Natural killer cell (primary cell): ENCODE measurements at regions of chr21 and their contacts with region 1.

Region 1: DNA sequence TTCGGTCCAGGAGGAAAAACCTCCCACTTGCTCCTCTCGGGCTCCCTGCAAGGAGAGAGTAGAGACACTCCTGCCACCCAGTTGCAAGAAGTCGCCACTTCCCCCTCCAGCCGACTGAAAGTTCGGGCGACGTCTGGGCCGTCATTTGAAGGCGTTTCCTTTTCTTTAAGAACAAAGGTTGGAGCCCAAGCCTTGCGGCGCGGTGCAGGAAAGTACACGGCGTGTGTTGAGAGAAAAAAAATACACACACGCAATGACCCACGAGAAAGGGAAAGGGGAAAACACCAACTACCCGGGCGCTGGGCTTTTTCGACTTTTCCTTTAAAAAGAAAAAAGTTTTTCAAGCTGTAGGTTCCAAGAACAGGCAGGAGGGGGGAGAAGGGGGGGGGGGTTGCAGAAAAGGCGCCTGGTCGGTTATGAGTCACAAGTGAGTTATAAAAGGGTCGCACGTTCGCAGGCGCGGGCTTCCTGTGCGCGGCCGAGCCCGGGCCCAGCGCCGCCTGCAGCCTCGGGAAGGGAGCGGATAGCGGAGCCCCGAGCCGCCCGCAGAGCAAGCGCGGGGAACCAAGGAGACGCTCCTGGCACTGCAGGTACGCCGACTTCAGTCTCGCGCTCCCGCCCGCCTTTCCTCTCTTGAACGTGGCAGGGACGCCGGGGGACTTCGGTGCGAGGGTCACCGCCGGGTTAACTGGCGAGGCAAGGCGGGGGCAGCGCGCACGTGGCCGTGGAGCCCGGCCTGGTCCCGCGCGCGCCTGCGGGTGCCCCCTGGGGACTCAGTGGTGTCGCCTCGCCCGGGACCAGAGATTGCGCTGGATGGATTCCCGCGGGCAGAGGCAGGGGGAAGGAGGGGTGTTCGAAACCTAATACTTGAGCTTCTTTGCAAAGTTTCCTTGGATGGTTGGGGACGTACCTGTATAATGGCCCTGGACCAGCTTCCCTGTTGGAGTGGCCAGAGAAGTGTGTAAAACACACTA is 45.3 kb downstream of the MRPL39 start:
- DNase-seq: peak; percentile 67 to 82
- ATAC-seq: peak; percentile 68 to 81 (median 77)
- H3K4me3 ChIP-seq: peak overlapping the region; percentile 52
- H3K4me3 Mint-ChIP-seq: peak overlapping the region; percentile 97
- H3K27ac ChIP-seq: peak overlapping the region; percentile 52
- H3K27ac Mint-ChIP-seq: peak overlapping the region; percentile 83 to 84
- H3K4me1 ChIP-seq: peaks cover 28% of the 10 kb centered on the region
- H3K4me1 Mint-ChIP-seq: peaks cover 45 to 46% of the 10 kb centered on the region in 2 donors
- H3K27me3 ChIP-seq: no peaks in the 10 kb centered on the region
- H3K27me3 Mint-ChIP-seq: no peaks in the 10 kb centered on the region
- CTCF ChIP-seq: no peak

Region 2: GRCh38 chr21:25421327-25422028 is 140.5 kb before region 1 on chr21:
- intact Hi-C with region 1: loop called (anchors 1 kb)
- DNase-seq: peak in 1 of 2 donors; percentile 84
- ATAC-seq: peak; percentile 62 to 74 (median 68)
- H3K4me3 ChIP-seq: no peak overlapping the region
- H3K4me3 Mint-ChIP-seq: no peak overlapping the region
- H3K27ac ChIP-seq: peak overlapping the region; percentile 23
- H3K27ac Mint-ChIP-seq: no peak overlapping the region
- H3K4me1 ChIP-seq: no peaks in the 10 kb centered on the region
- H3K4me1 Mint-ChIP-seq: peaks cover 5% of the 10 kb centered on the region in 2 donors
- H3K27me3 ChIP-seq: peaks cover 3% of the 10 kb centered on the region
- H3K27me3 Mint-ChIP-seq: peaks cover 2 to 12% of the 10 kb centered on the region in 2 donors
- CTCF ChIP-seq: peak; percentile 48

Region 3: DNA sequence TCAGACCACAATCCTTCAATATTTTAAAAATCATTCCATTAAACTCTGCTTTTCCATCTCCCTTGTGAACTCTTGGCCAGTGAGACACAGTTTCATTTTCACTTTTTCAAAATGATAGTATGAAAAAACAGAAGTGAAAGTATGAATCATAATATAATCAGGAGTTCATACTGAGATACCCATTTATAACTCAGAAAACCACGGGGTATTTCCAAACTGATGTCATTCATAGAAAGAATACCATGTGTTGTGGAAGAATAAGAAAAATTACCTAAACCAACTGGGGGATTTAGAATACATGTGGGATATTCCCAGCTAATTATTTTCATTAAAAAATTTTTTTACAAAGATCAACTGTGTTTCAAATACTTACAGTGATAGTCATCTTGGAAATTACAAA is 104.5 kb before region 1 on chr21:
- intact Hi-C with region 1: loop called (anchors 5 kb)
- DNase-seq: peak in 1 of 2 donors; percentile 82
- ATAC-seq: peak; percentile 87 to 95 (median 92)
- H3K4me3 ChIP-seq: no peak overlapping the region
- H3K4me3 Mint-ChIP-seq: peak overlapping the region; percentile 79
- H3K27ac ChIP-seq: peak overlapping the region; percentile 75
- H3K27ac Mint-ChIP-seq: peak overlapping the region; percentile 86
- H3K4me1 ChIP-seq: peaks cover 9% of the 10 kb centered on the region
- H3K4me1 Mint-ChIP-seq: peaks cover 10 to 11% of the 10 kb centered on the region in 2 donors
- H3K27me3 ChIP-seq: no peaks in the 10 kb centered on the region
- H3K27me3 Mint-ChIP-seq: no peaks in the 10 kb centered on the region
- CTCF ChIP-seq: no peak

Region 4: GRCh38 chr21:25515484-25516405 is 46.2 kb before region 1 on chr21:
- intact Hi-C with region 1: no loop called
- DNase-seq: no peak
- ATAC-seq: no peak
- H3K4me3 ChIP-seq: no peak overlapping the region
- H3K4me3 Mint-ChIP-seq: no peak overlapping the region
- H3K27ac ChIP-seq: no peak overlapping the region
- H3K27ac Mint-ChIP-seq: no peak overlapping the region
- H3K4me1 ChIP-seq: no peaks in the 10 kb centered on the region
- H3K4me1 Mint-ChIP-seq: no peaks in the 10 kb centered on the region
- H3K27me3 ChIP-seq: no peaks in the 10 kb centered on the region
- H3K27me3 Mint-ChIP-seq: peaks cover 7 to 10% of the 10 kb centered on the region in 2 donors
- CTCF ChIP-seq: no peak